ENCODE measurements at regions of chr7 and their contacts with region 1.

Region 1: GRCh38 chr7:145774777-145775176 is 341.8 kb upstream of the CNTNAP2 start:
- DNase-seq: no peak
- ATAC-seq: no peak
- H3K4me3 ChIP-seq: no peak overlapping the region
- H3K27ac ChIP-seq: no peak overlapping the region
- H3K4me1 ChIP-seq: no peaks in the 10 kb centered on the region
- H3K27me3 ChIP-seq: no peaks in the 10 kb centered on the region
- CTCF ChIP-seq: no peak

Region 2: DNA sequence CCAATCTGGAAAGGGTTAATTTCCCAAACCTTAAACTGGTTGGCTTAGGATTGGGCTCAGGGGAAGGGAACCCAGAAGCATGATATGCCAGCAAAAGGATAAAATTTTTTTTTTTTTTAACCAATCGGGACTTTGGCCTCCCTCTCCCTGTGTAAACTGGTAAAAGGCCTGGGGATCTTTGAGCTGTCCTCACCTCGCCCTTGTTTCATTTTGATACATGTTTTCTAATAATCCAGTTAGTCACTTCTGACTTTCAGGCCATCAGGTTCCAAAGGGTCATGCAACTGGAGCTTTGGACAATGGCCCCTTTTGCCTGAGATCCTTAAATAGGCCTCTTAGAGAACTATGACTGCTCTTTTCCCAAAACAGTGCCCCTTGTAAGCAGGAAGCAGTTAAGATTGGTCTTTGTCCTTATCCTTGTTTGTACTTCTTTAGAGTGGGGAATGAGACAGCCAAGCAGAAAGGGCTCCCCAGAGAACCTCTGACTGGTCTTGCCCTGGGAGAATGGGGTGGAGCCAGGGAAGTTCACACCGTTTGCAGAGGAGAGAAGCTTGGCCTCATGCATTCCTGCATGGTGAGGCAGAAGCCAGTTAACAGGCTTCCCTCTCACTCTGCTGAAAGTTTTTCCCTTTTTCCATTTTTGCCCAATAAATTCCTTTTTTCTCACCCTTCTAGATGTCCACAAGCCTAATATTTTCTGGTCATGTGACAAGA is 82.4 kb before region 1 on chr7:
- CTCF ChIA-PET with region 1: no interaction called
- POLR2A ChIA-PET with region 1: no interaction called
- in situ Hi-C with region 1: no loop called
- intact Hi-C with region 1: no loop called
- DNase-seq: no peak
- ATAC-seq: no peak
- H3K4me3 ChIP-seq: no peak overlapping the region
- H3K27ac ChIP-seq: no peak overlapping the region
- H3K4me1 ChIP-seq: no peaks in the 10 kb centered on the region
- H3K27me3 ChIP-seq: no peaks in the 10 kb centered on the region
- CTCF ChIP-seq: no peak

Region 3: DNA sequence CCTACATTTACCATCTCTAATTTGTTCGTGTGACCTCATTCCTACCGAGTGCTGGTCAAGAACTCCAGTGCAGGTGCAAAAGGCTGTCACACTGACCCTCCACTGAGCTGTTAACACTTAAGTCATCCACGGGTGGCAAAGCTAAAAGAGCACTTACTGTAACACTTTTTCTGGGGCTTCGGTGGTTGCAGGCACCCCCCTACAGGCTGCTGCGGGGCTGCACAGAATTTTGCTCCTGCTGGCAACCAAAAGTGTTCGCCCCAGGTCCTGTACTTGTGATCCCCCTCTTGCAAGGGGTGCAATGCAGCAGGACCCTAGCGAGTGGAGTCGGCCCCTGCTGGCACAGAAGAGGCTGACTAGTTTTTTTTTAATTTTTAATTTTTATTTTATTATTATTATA is 42.9 kb after region 1 on chr7:
- CTCF ChIA-PET with region 1: no interaction called
- POLR2A ChIA-PET with region 1: no interaction called
- in situ Hi-C with region 1: no loop called
- intact Hi-C with region 1: loop called (anchors 5 kb)
- DNase-seq: no peak
- ATAC-seq: no peak
- H3K4me3 ChIP-seq: no peak overlapping the region
- H3K27ac ChIP-seq: no peak overlapping the region
- H3K4me1 ChIP-seq: no peaks in the 10 kb centered on the region
- H3K27me3 ChIP-seq: no peaks in the 10 kb centered on the region
- CTCF ChIP-seq: no peak